A673 (cell line): ENCODE measurements at regions of chr2 and their contacts with region 1.

Region 1: GRCh38 chr2:70124983-70125480 is 37.8 kb downstream of the PCBP1 start:
- DNase-seq: peak; percentile 80
- H3K4me3 ChIP-seq: peak overlapping the region; percentile 58
- H3K27ac ChIP-seq: peak overlapping the region; percentile 99
- H3K4me1 ChIP-seq: peaks cover 23% of the 10 kb centered on the region
- H3K27me3 ChIP-seq: no peaks in the 10 kb centered on the region
- CTCF ChIP-seq: no peak

Region 2: GRCh38 chr2:70142590-70143313 is 17.7 kb after region 1 on chr2:
- CTCF ChIA-PET with region 1: interaction called, 6 read pairs
- POLR2A ChIA-PET with region 1: interaction called, 11 read pairs
- intact Hi-C with region 1: no loop called
- DNase-seq: peak; percentile 100
- H3K4me3 ChIP-seq: peak overlapping the region; percentile 62
- H3K27ac ChIP-seq: peak overlapping the region; percentile 97
- H3K4me1 ChIP-seq: peaks cover 9% of the 10 kb centered on the region
- H3K27me3 ChIP-seq: no peaks in the 10 kb centered on the region
- CTCF ChIP-seq: peak; percentile 98